Activated CD8-positive, alpha-beta T cell treated with anti-CD3 and anti-CD28 coated beads, Interleukin-2, amount 10 ng/mL, durations not matched to agents 7 days and 5 days (primary cell): ENCODE measurements at regions of chr19 and their contacts with region 1.

Region 1: DNA sequence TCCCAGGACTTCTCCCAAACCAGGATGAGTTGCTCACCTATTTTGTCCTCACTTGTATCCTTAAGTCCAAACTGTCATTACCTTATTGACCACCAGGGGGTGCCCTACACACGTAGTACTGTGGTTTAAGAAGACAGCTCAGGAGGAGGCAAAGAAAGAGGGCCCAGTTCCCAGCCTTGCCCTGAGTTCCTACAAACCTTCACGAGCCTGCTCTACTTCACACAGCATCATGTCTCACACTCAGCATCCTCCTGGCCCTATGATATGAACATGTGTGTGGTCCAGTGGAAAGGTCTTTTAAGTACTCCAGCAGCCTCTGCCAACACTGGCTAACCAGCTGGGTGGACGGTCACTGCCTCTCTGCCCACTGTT is 8.1 kb upstream of the ZNF784 start:
- DNase-seq: peak; percentile 95
- ATAC-seq: peak; percentile 42
- H3K4me3 Mint-ChIP-seq: no peak overlapping the region
- H3K27ac Mint-ChIP-seq: peak overlapping the region; percentile 56
- H3K4me1 Mint-ChIP-seq: peaks cover 53% of the 10 kb centered on the region
- H3K27me3 Mint-ChIP-seq: peaks cover 9% of the 10 kb centered on the region

Region 2: GRCh38 chr19:55467236-55468053 is 165.0 kb before region 1 on chr19:
- CTCF ChIA-PET with region 1: interaction called, 21 read pairs
- POLR2A ChIA-PET with region 1: no interaction called
- DNase-seq: peak; percentile 71
- ATAC-seq: peak; percentile 89
- H3K4me3 Mint-ChIP-seq: no peak overlapping the region
- H3K27ac Mint-ChIP-seq: no peak overlapping the region
- H3K4me1 Mint-ChIP-seq: peaks cover 3% of the 10 kb centered on the region
- H3K27me3 Mint-ChIP-seq: no peaks in the 10 kb centered on the region

Region 3: GRCh38 chr19:55599468-55600279 is 32.8 kb before region 1 on chr19 and contains the start of gene FIZ1:
- CTCF ChIA-PET with region 1: interaction called, 59 read pairs
- POLR2A ChIA-PET with region 1: interaction called, 9 read pairs
- DNase-seq: peak; percentile 98
- ATAC-seq: peak; percentile 80
- H3K4me3 Mint-ChIP-seq: peak within 1 kb of the TSS; percentile 97
- H3K27ac Mint-ChIP-seq: peak within 1 kb of the TSS; percentile 100
- H3K4me1 Mint-ChIP-seq: peaks cover 38% of the 10 kb centered on the region
- H3K27me3 Mint-ChIP-seq: no peaks in the 10 kb centered on the region
- total RNA-seq, gene FIZ1: 13.6 to 13.7 TPM

Region 4: GRCh38 chr19:55643348-55644176 is 11.1 kb after region 1 on chr19 and contains the start of gene ZNF581:
- CTCF ChIA-PET with region 1: interaction called, 39 read pairs
- POLR2A ChIA-PET with region 1: interaction called, 8 read pairs
- DNase-seq: peak; percentile 82
- ATAC-seq: peak; percentile 61
- H3K4me3 Mint-ChIP-seq: peak within 1 kb of the TSS; percentile 86
- H3K27ac Mint-ChIP-seq: peak within 1 kb of the TSS; percentile 95
- H3K4me1 Mint-ChIP-seq: peaks cover 57% of the 10 kb centered on the region
- H3K27me3 Mint-ChIP-seq: no peaks in the 10 kb centered on the region
- total RNA-seq, gene ZNF581: 22.7 to 24.4 TPM

Region 5: DNA sequence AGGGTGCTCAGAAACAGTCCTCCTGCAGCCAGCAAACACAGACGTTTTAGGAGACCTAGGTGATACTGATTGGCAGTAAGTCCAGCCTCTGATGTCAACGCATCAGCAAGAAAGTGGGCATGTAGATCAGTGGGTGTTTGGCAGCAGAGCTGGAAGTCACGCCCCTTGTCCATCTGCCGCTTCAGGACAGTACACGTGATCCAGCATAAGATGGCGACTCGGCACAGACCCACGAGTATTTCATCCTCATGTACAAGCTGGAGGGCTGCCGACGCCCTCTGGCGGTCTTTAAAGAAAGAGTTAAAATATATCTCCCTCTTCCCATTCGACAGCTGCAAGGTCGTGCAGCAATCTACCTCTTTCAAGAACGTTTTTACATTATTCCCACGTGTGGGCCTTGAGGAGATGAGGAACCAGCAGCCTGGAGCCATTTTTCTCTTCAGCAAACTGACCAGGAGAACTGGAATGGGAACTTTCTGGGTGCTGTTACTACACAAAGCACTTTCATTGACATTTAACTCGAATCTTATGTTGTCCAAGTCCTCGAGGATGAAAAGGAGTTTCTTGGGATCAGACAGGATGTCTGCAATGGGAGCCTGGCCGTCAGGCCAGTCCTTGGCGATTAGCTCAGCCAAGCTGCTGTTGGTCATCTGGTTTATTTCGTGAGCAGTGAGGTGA is 177.1 kb after region 1 on chr19:
- CTCF ChIA-PET with region 1: interaction called, 17 read pairs
- POLR2A ChIA-PET with region 1: no interaction called
- DNase-seq: peak; percentile 49
- ATAC-seq: peak; percentile 73
- H3K4me3 Mint-ChIP-seq: no peak overlapping the region
- H3K27ac Mint-ChIP-seq: no peak overlapping the region
- H3K4me1 Mint-ChIP-seq: peaks cover 3% of the 10 kb centered on the region
- H3K27me3 Mint-ChIP-seq: no peaks in the 10 kb centered on the region